ENCODE measurements at regions of chr11 and their contacts with region 1.

Region 1: DNA sequence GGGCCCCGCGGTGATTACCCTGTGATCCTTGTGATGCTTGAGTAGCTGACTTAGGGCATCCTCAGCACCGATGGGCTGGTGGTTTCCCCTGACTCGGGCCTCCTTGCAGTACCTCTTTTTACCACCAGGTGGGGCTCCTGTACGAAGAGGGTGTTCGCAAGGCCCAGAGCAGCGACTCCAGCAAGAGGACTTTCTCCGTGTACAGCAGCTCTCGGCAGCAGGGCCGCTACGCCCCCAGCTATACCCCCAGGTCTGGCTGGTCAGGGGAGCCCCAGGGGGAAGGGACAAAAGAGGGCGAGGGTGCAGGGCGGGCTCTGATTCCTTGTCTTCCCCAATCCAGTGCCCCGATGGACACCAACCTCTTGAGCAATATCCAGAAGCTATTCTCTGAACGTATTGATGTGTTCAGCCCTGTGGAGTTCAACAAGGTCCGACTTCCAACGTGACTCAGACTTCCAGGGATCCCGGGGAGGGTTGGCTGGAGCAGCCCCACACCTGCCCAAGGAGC is 1.3 kb upstream of the TM7SF2 start:
- DNase-seq: peak; percentile 74
- H3K27ac ChIP-seq: peak overlapping the region; percentile 86
- CTCF ChIP-seq: peak; percentile 96

Region 2: GRCh38 chr11:65095974-65096806 is 14.2 kb before region 1 on chr11 and contains the start of gene VPS51:
- CTCF ChIA-PET with region 1: interaction called, 13 read pairs
- POLR2A ChIA-PET with region 1: no interaction called
- DNase-seq: peak; percentile 93
- H3K27ac ChIP-seq: peak within 1 kb of the TSS; percentile 85
- CTCF ChIP-seq: no peak